Heart left ventricle (tissue), 16 donors: ENCODE measurements at regions of chr3 and their contacts with region 1.

Region 1: DNA sequence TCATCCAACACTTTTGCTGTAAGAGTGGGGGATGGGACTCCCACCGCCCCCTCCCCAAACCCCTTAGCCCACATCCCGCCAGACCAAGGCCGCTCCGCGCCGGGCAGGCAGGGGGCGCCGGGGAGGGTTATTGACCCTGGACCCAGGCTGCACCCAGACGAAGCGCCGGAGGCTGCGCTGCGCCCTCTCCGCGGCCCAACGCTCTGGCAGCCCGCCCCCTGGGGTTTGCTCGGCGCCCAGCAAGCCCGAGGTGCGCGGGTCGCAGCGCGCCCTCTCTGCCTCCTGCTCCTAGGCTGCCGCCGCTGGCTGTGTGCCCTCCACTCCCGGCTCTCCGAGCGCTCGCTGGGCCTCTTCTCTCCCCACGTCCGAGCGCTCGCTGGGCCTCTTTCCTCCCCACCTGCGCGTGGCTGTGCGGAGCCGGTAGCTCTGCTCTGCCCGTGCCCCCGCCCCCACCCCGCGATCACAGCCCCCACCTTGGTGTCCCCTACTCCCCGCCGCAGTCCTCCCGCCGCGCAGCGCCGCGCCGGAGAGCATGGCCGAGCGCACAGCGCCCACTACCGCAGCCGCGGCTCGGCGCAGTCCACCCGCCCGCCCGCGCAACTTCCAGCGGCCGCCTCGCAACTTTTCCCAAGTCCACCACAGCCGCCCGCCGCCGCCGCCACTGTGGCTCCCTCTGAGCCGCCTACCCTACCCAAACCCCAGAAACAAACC is 1.2 kb downstream of the MECOM start:
- DNase-seq: peak; percentile 71 to 84 (median 72)
- ATAC-seq: peak; percentile 43 to 88 (median 80)
- H3K4me3 ChIP-seq: peak overlapping the region; percentile 68 to 95 (median 77)
- H3K27ac ChIP-seq: peak overlapping the region; percentile 74 to 96 (median 92)
- H3K4me1 ChIP-seq: peaks cover 0 to 69% (median 12%) of the 10 kb centered on the region in 12 donors
- H3K27me3 ChIP-seq: peaks cover 9 to 94% (median 63%) of the 10 kb centered on the region in 9 donors
- CTCF ChIP-seq: peak; percentile 22 to 68 (median 53)
- POLR2A ChIP-seq: no peak

Region 2: DNA sequence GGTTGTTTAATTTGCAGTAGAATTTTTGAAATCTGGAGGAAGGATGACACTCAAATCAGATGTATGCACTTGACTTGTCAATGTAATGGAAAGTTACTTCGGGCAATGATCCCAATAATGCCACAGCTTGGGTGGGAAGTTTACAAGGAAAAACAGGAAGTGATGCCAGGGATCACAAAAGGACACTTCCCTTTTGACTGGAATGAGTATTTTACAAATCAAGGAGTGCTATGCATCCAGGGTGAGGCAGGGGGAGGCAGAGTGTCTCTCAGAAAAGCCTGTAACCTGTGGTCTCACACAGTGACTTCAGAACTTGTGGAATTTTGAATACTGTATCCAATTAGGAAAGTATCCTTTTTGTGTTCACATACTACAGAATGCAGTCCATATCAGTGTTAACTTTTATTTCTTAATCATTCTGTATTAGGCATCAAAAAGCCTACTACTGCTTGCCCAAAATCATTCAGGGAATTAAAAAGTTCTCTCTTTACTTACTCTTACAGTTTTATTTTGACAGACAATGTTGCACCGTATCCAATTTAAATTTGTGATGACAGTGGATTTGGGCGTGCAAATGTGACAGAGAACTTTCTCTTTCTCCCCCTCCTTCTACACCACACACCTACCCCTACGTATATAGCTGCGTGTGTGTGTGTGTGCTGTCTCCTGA is 443.8 kb before region 1 on chr3:
- intact Hi-C with region 1: loop called in 8 of 10 experiments (anchors 1 to 10 kb)
- DNase-seq: peak in 4 of 5 donors; percentile 30 to 60 (median 42)
- ATAC-seq: peak; percentile 61 to 84 (median 80)
- H3K4me3 ChIP-seq: no peak overlapping the region
- H3K27ac ChIP-seq: peak overlapping the region in 2 of 12 donors; percentile 4 to 21
- H3K4me1 ChIP-seq: peaks cover 0 to 10% (median 1%) of the 10 kb centered on the region in 12 donors
- H3K27me3 ChIP-seq: no peaks in the 10 kb centered on the region
- CTCF ChIP-seq: peak; percentile 44 to 79 (median 62)
- POLR2A ChIP-seq: no peak

Region 3: GRCh38 chr3:169390271-169391230 is 271.7 kb before region 1 on chr3:
- intact Hi-C with region 1: loop called in 4 of 10 experiments (anchors 2 to 10 kb)
- DNase-seq: no peak
- ATAC-seq: no peak
- H3K4me3 ChIP-seq: no peak overlapping the region
- H3K27ac ChIP-seq: peak overlapping the region in 4 of 12 donors; percentile 21 to 59 (median 32)
- H3K4me1 ChIP-seq: peaks cover 0 to 39% (median 16%) of the 10 kb centered on the region in 12 donors
- H3K27me3 ChIP-seq: no peaks in the 10 kb centered on the region
- CTCF ChIP-seq: peak in 4 of 12 donors; percentile 9 to 30 (median 26)
- POLR2A ChIP-seq: no peak

Region 4: GRCh38 chr3:169564883-169565282 is 97.4 kb before region 1 on chr3:
- intact Hi-C with region 1: loop called in 3 of 10 experiments (anchors 5 to 10 kb)
- DNase-seq: no peak
- ATAC-seq: no peak
- H3K4me3 ChIP-seq: no peak overlapping the region
- H3K27ac ChIP-seq: no peak overlapping the region
- H3K4me1 ChIP-seq: peaks cover 0 to 6% (median 0%) of the 10 kb centered on the region in 12 donors
- H3K27me3 ChIP-seq: no peaks in the 10 kb centered on the region
- CTCF ChIP-seq: peak in 1 of 12 donors; percentile 4
- POLR2A ChIP-seq: no peak

Region 5: DNA sequence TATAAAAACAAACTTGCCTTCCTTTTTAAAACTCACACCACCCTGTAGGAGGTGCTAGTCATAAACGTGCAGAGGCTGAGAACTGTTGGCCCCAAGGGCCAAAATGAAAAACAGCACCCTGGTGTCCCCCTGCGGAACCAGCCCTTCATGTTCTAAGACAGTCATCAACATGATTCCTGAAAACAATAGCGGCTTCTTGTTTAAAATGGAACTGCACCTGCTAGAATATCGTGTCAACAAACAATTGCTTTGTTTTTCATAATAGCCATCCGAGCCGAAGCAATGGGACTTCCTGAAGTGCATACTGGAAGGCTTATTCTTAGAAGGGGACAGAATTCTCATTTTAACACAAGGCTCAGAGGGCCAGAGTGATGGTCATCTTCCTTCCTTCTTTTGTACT is 42.5 kb before region 1 on chr3:
- intact Hi-C with region 1: loop called in 1 of 10 experiments (anchors 2 kb)
- DNase-seq: no peak
- ATAC-seq: peak in 1 of 4 donors; percentile 80
- H3K4me3 ChIP-seq: no peak overlapping the region
- H3K27ac ChIP-seq: peak overlapping the region in 9 of 12 donors; percentile 10 to 60 (median 25)
- H3K4me1 ChIP-seq: peaks cover 0 to 21% (median 8%) of the 10 kb centered on the region in 12 donors
- H3K27me3 ChIP-seq: no peaks in the 10 kb centered on the region
- CTCF ChIP-seq: peak in 4 of 12 donors; percentile 5 to 18 (median 14)
- POLR2A ChIP-seq: no peak

Region 6: GRCh38 chr3:169710619-169711018 is 48.3 kb after region 1 on chr3:
- intact Hi-C with region 1: no loop called
- DNase-seq: no peak
- ATAC-seq: no peak
- H3K4me3 ChIP-seq: no peak overlapping the region
- H3K27ac ChIP-seq: no peak overlapping the region
- H3K4me1 ChIP-seq: no peaks in the 10 kb centered on the region
- H3K27me3 ChIP-seq: no peaks in the 10 kb centered on the region
- CTCF ChIP-seq: no peak
- POLR2A ChIP-seq: no peak